B cell (primary cell): ENCODE measurements at regions of chr18 and their contacts with region 1.

Region 1: GRCh38 chr18:63320046-63320689 is 599 bp upstream of the BCL2 start:
- DNase-seq: peak; percentile 93
- ATAC-seq: peak; percentile 75
- H3K4me3 ChIP-seq: peak overlapping the region in 4 of 5 experiments; percentile 51 to 98 (median 88)
- H3K4me3 Mint-ChIP-seq: peak overlapping the region; percentile 95
- H3K27ac ChIP-seq: peak overlapping the region; percentile 52 to 92
- H3K27ac Mint-ChIP-seq: peak overlapping the region; percentile 96
- H3K4me1 ChIP-seq: peaks cover 18 to 34% of the 10 kb centered on the region in 2 donors
- H3K4me1 Mint-ChIP-seq: peaks cover 44% of the 10 kb centered on the region
- H3K27me3 ChIP-seq: no peaks in the 10 kb centered on the region
- H3K27me3 Mint-ChIP-seq: no peaks in the 10 kb centered on the region
- CTCF ChIP-seq: no peak

Region 2: DNA sequence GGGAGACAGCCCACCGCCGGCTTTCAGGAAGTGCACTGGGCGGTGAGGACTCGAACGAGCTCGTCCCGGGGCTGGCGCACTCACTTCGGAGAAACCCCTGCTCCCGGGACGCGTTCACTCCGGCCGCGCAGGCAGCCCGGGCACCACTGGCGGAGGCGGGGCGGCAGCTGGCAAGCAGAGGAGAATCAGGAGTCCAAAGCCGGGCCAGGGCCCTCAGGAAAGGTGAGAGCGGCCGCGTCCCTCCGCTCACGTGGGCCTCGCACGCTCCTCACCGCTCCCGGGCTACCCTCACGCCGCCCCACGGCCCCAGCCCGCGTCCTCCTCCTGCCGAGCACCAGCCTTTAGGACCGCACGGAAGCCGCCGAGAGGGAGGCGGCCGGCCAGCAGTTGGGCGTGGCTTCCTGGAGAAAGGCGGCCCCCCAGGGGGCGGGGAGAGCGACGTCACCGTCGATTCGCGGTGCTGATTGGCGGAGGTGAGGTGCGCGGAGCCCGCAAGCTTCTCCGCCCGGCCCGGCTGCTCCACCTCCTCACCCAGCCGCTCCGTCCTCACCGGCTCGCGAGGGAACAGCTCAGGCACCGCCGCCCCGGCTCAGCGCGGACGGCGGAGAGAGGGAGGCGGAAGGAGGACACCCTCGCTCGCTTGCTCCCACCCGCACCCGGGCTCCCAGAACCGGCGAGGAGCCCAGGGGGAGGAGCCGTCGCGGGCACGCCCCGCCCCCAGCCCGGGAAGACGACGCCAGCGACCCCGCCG is 797.5 kb before region 1 on chr18 and contains the start of gene ZCCHC2:
- CTCF ChIA-PET with region 1: no interaction called
- POLR2A ChIA-PET with region 1: no interaction called
- intact Hi-C with region 1: loop called (anchors 10 kb)
- DNase-seq: peak; percentile 99
- ATAC-seq: peak; percentile 74
- H3K4me3 ChIP-seq: peak within 1 kb of the TSS; percentile 77 to 88 (median 86)
- H3K4me3 Mint-ChIP-seq: peak within 1 kb of the TSS; percentile 97
- H3K27ac ChIP-seq: peak within 1 kb of the TSS; percentile 73 to 93
- H3K27ac Mint-ChIP-seq: peak within 1 kb of the TSS; percentile 93
- H3K4me1 ChIP-seq: peaks cover 28 to 29% of the 10 kb centered on the region in 2 donors
- H3K4me1 Mint-ChIP-seq: peaks cover 29% of the 10 kb centered on the region
- H3K27me3 ChIP-seq: no peaks in the 10 kb centered on the region
- H3K27me3 Mint-ChIP-seq: no peaks in the 10 kb centered on the region
- CTCF ChIP-seq: no peak
- total RNA-seq, gene ZCCHC2: 53.7 and 63.0 TPM in 2 replicates

Region 3: GRCh38 chr18:63113899-63114565 is 206.1 kb before region 1 on chr18:
- CTCF ChIA-PET with region 1: interaction called, 19 read pairs
- POLR2A ChIA-PET with region 1: no interaction called
- intact Hi-C with region 1: no loop called
- DNase-seq: no peak
- ATAC-seq: no peak
- H3K4me3 ChIP-seq: no peak overlapping the region
- H3K4me3 Mint-ChIP-seq: no peak overlapping the region
- H3K27ac ChIP-seq: no peak overlapping the region
- H3K27ac Mint-ChIP-seq: no peak overlapping the region
- H3K4me1 ChIP-seq: peaks cover 16 to 17% of the 10 kb centered on the region in 2 donors
- H3K4me1 Mint-ChIP-seq: peaks cover 17% of the 10 kb centered on the region
- H3K27me3 ChIP-seq: no peaks in the 10 kb centered on the region
- H3K27me3 Mint-ChIP-seq: peaks cover 15% of the 10 kb centered on the region
- CTCF ChIP-seq: no peak

Region 4: DNA sequence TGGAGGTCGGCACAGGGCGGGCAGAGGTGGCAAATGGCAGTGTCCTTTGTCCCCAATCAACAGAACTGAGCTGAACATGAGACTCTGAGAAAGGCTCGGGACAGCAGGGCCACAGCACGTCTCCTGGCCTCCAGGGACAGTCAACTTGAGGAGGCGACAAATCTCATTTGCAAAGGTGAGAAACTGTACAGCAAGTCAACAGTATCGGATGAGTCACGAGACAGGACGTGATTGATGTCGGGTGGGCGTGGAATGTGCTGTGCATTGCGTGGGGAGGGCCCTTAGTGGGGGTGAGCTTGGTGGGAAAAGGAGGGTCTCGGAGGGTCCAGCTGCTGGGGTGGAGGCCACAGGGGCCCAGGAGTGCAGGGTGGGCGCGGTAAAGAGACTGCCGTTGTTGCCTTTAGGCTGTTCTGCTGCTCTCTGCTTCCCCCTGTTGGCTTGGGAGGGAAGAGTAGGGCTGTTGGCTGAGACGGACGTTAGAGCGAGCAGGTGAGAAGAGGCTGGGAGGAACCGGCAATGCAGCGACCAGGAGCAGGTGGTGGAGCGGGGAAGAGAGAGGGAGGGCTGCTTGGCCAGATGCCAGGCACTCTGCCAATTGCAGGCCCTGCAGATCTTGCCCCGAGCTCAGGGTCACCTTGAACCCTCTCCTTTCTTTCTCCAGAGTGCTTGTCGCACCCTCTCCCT is 164.9 kb before region 1 on chr18:
- CTCF ChIA-PET with region 1: interaction called, 98 read pairs
- POLR2A ChIA-PET with region 1: interaction called, 13 read pairs
- intact Hi-C with region 1: loop called (anchors 1 kb)
- DNase-seq: peak; percentile 90
- ATAC-seq: peak; percentile 65
- H3K4me3 ChIP-seq: peak overlapping the region in 4 of 5 experiments; percentile 15 to 48 (median 34)
- H3K4me3 Mint-ChIP-seq: peak overlapping the region; percentile 80
- H3K27ac ChIP-seq: peak overlapping the region; percentile 57 to 89
- H3K27ac Mint-ChIP-seq: peak overlapping the region; percentile 96
- H3K4me1 ChIP-seq: peaks cover 69 to 70% of the 10 kb centered on the region in 2 donors
- H3K4me1 Mint-ChIP-seq: peaks cover 95% of the 10 kb centered on the region
- H3K27me3 ChIP-seq: no peaks in the 10 kb centered on the region
- H3K27me3 Mint-ChIP-seq: no peaks in the 10 kb centered on the region
- CTCF ChIP-seq: peak; percentile 84

Region 5: GRCh38 chr18:63224630-63225029 is 95.5 kb before region 1 on chr18:
- CTCF ChIA-PET with region 1: interaction called, 11 read pairs
- POLR2A ChIA-PET with region 1: no interaction called
- intact Hi-C with region 1: no loop called
- DNase-seq: no peak
- ATAC-seq: peak; percentile 43
- H3K4me3 ChIP-seq: no peak overlapping the region
- H3K4me3 Mint-ChIP-seq: peak overlapping the region; percentile 20
- H3K27ac ChIP-seq: peak overlapping the region; percentile 32 to 72
- H3K27ac Mint-ChIP-seq: peak overlapping the region; percentile 57
- H3K4me1 ChIP-seq: peaks cover 18 to 24% of the 10 kb centered on the region in 2 donors
- H3K4me1 Mint-ChIP-seq: peaks cover 55% of the 10 kb centered on the region
- H3K27me3 ChIP-seq: no peaks in the 10 kb centered on the region
- H3K27me3 Mint-ChIP-seq: no peaks in the 10 kb centered on the region
- CTCF ChIP-seq: no peak

Region 6: DNA sequence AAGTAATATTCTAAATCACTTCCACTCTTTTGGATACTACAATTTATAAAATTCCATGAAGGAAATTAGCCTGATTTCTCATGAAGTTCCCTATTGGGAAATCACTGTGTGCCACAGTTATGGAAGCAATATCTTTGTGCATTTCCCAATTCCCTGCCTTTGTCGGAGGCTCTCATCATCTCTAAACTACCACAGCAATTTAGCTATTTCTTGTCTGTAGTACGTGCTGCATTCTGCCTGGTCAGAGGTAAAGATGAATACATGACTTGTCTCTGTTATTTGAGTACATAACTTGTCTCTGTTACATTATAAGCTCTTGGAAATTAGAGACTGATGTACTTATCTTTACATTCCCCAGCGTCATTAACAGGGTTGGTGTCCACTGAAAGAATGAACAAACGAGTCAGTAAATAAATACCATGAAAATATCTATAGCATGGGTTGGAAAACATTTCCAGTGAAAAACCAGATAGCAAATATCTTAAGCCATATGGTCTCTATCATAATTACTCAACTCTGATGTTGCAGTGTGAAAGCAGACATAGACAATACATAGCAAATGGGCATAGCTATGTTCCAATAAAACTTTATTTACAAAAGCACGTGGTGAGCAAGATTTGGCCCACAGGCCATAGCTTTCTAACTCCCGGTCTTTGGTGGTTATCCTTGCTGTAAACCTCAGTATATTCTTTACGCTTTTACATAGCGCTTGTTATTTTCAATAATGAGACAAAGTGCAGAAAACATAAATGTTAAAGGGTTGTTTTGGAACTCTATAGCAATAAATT is 79.4 kb before region 1 on chr18:
- CTCF ChIA-PET with region 1: no interaction called
- POLR2A ChIA-PET with region 1: no interaction called
- intact Hi-C with region 1: no loop called
- DNase-seq: no peak
- ATAC-seq: no peak
- H3K4me3 ChIP-seq: no peak overlapping the region
- H3K4me3 Mint-ChIP-seq: no peak overlapping the region
- H3K27ac ChIP-seq: no peak overlapping the region
- H3K27ac Mint-ChIP-seq: no peak overlapping the region
- H3K4me1 ChIP-seq: peaks cover 0 to 2% of the 10 kb centered on the region in 2 donors
- H3K4me1 Mint-ChIP-seq: peaks cover 23% of the 10 kb centered on the region
- H3K27me3 ChIP-seq: no peaks in the 10 kb centered on the region
- H3K27me3 Mint-ChIP-seq: no peaks in the 10 kb centered on the region
- CTCF ChIP-seq: no peak

Region 7: DNA sequence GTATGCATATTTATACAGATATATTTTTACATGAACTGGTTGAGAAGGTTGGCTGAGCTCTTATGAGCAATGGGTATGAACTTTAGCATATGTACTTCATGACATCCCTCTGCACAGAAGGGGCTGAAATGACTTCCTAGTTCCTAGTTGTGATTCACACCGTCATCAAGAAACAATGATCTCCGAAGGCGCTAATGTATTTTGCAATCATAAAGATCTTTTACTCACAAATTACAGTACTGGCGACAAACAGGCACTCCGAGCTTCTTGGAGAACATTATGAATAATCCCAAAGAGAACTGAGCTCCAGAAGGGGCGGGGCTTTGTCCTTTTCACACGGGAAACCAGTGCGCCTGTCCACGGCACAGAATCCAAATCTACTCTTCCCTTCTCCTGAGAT is 18.7 kb before region 1 on chr18:
- CTCF ChIA-PET with region 1: interaction called, 25 read pairs
- POLR2A ChIA-PET with region 1: no interaction called
- intact Hi-C with region 1: no loop called
- DNase-seq: no peak
- ATAC-seq: no peak
- H3K4me3 ChIP-seq: no peak overlapping the region
- H3K4me3 Mint-ChIP-seq: peak overlapping the region; percentile 42
- H3K27ac ChIP-seq: no peak overlapping the region
- H3K27ac Mint-ChIP-seq: peak overlapping the region; percentile 56
- H3K4me1 ChIP-seq: peaks cover 36% of the 10 kb centered on the region in 2 donors
- H3K4me1 Mint-ChIP-seq: peaks cover 77% of the 10 kb centered on the region
- H3K27me3 ChIP-seq: no peaks in the 10 kb centered on the region
- H3K27me3 Mint-ChIP-seq: no peaks in the 10 kb centered on the region
- CTCF ChIP-seq: no peak

Region 8: DNA sequence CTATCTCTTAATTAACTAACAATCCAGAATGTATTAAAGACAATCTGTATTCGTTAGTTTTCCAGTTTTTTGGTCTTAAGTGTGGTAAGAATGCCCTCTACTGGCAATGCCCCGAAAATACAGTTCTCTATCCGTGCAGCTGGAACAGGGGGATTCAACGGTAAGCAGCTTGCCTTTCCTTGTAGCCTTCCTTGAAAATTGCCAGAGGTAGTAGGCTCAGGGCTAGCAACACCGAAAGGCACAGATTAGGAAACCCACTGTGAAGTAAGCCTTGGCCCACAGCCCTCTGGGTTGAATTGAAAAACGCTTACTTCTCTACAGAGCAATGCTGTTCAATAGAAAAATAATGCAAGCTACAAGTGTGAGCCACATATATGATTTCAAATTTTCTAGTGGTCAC is 119.2 kb after region 1 on chr18:
- CTCF ChIA-PET with region 1: interaction called, 15 read pairs
- POLR2A ChIA-PET with region 1: no interaction called
- intact Hi-C with region 1: loop called (anchors 1 kb)
- DNase-seq: peak; percentile 72
- ATAC-seq: peak; percentile 78
- H3K4me3 ChIP-seq: no peak overlapping the region
- H3K4me3 Mint-ChIP-seq: no peak overlapping the region
- H3K27ac ChIP-seq: no peak overlapping the region
- H3K27ac Mint-ChIP-seq: no peak overlapping the region
- H3K4me1 ChIP-seq: peaks cover 2 to 5% of the 10 kb centered on the region in 2 donors
- H3K4me1 Mint-ChIP-seq: peaks cover 5% of the 10 kb centered on the region
- H3K27me3 ChIP-seq: no peaks in the 10 kb centered on the region
- H3K27me3 Mint-ChIP-seq: peaks cover 16% of the 10 kb centered on the region
- CTCF ChIP-seq: peak; percentile 94